ENCODE measurements at regions of chr1 and their contacts with region 1.

Region 1: DNA sequence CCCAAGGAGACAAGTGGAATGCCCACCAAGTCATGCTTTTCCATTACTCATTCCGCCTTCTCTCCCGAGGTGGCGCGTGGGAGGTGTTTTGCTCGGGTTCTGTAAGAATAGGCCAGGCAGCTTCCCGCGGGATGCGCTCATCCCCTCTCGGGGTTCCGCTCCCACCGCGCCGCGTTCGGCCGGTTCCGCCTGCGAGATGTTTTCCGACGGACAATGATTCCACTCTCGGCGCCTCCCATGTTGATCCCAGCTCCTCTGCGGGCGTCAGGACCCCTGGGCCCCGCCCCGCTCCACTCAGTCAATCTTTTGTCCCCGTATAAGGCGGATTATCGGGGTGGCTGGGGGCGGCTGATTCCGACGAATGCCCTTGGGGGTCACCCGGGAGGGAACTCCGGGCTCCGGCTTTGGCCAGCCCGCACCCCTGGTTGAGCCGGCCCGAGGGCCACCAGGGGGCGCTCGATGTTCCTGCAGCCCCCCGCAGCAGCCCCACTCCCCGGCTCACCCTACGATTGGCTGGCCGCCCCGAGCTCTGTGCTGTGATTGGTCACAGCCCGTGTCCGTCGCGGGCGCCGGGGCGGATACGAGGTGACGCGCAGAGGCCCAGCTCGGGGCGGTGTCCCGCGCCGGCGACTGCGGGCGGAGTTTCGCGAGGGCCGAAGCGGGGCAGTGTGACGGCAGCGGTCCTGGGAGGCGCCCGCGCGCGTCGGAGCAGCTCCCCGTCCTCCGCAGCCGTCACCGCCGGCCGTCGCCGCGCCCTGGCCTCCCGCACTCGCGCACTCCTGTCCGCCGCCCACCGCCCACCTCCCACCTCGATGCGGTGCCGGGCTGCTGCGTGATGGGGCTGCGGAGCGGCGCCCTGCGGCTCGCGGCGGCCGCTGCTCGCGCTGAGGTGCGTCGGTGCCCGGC is at the start of gene KIF1B:
- DNase-seq: peak; percentile 98
- H3K4me3 ChIP-seq: peak within 1 kb of the TSS; percentile 68 to 83 (median 79)
- H3K27ac ChIP-seq: peak within 1 kb of the TSS; percentile 87
- H3K4me1 ChIP-seq: peaks cover 15% of the 10 kb centered on the region
- H3K27me3 ChIP-seq: no peaks in the 10 kb centered on the region
- CTCF ChIP-seq: peak; percentile 98 to 99
- POLR2A ChIP-seq: peak; percentile 55
- total RNA-seq, gene KIF1B: 46.6 and 58.6 TPM in 2 replicates

Region 2: GRCh38 chr1:9904596-9904995 is 305.6 kb before region 1 on chr1:
- CTCF ChIA-PET with region 1: no interaction called
- POLR2A ChIA-PET with region 1: no interaction called
- dilution Hi-C with region 1: no loop called
- intact Hi-C with region 1: no loop called
- DNase-seq: no peak
- H3K4me3 ChIP-seq: no peak overlapping the region
- H3K27ac ChIP-seq: no peak overlapping the region
- H3K4me1 ChIP-seq: peaks cover 10% of the 10 kb centered on the region
- H3K27me3 ChIP-seq: no peaks in the 10 kb centered on the region
- CTCF ChIP-seq: no peak
- POLR2A ChIP-seq: no peak

Region 3: DNA sequence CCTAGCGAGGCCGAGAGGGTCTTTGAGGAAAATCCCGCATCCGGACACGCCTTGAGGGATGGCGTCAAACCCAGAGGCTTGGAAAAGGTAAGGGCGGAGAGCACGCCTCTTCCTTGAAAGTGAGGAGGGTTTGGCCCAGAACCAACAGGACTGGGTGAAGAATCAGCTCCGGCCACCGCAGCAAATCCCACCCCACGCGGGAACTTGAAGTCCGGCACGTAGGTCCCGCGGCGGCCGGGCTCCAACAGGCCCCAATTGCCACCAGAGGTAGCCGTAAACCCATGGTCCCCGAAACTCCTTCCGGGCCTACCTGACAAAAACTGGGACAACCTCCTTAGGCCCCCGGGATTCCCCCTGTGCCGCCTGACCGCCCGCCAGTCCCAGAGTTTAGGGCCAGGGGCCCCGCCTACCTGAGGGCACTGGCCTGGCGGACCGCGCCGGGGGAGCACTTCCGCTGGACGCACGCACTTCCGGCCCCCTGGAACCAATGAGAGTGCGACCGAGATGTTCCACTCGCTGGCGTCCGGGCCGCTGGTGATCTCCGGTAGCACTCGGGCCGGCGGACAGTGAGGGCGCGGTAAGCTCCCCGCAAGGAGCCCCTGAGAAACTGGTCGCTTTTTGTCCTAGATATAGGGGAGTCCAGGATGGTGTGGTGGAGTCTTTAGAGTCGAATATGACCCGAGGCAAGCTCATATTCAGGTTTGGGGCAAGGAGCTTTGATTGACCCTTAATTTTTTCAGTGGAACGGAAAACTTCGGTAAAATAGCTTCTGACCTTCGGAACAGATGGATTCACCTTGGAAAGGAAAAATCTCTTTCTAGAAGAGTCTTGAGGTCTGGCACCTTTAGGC is 267.0 kb before region 1 on chr1 and contains the starts of genes LZIC and NMNAT1:
- CTCF ChIA-PET with region 1: no interaction called
- POLR2A ChIA-PET with region 1: no interaction called
- dilution Hi-C with region 1: no loop called
- intact Hi-C with region 1: loop called (anchors 2 kb)
- DNase-seq: peak; percentile 94
- H3K4me3 ChIP-seq: peak within 1 kb of the TSS; percentile 79 to 99 (median 95)
- H3K27ac ChIP-seq: peak within 1 kb of the TSS; percentile 91
- H3K4me1 ChIP-seq: peaks cover 4% of the 10 kb centered on the region
- H3K27me3 ChIP-seq: no peaks in the 10 kb centered on the region
- CTCF ChIP-seq: no peak
- POLR2A ChIP-seq: peak; percentile 96
- total RNA-seq, gene LZIC: 22.7 and 23.4 TPM in 2 replicates
- total RNA-seq, gene NMNAT1: 7.4 and 9.8 TPM in 2 replicates

Region 4: GRCh38 chr1:10229903-10230302 is 19.7 kb after region 1 on chr1:
- CTCF ChIA-PET with region 1: interaction called, 7 read pairs
- POLR2A ChIA-PET with region 1: interaction called, 4 read pairs
- dilution Hi-C with region 1: no loop called
- intact Hi-C with region 1: loop called (anchors 2 kb)
- DNase-seq: no peak
- H3K4me3 ChIP-seq: no peak overlapping the region
- H3K27ac ChIP-seq: no peak overlapping the region
- H3K4me1 ChIP-seq: no peaks in the 10 kb centered on the region
- H3K27me3 ChIP-seq: no peaks in the 10 kb centered on the region
- CTCF ChIP-seq: no peak
- POLR2A ChIP-seq: no peak

Region 5: GRCh38 chr1:10252508-10252907 is 42.4 kb after region 1 on chr1:
- CTCF ChIA-PET with region 1: interaction called, 16 read pairs
- POLR2A ChIA-PET with region 1: no interaction called
- dilution Hi-C with region 1: no loop called
- intact Hi-C with region 1: no loop called
- DNase-seq: no peak
- H3K4me3 ChIP-seq: no peak overlapping the region
- H3K27ac ChIP-seq: no peak overlapping the region
- H3K4me1 ChIP-seq: peaks cover 4% of the 10 kb centered on the region
- H3K27me3 ChIP-seq: no peaks in the 10 kb centered on the region
- CTCF ChIP-seq: no peak
- POLR2A ChIP-seq: no peak

Region 6: GRCh38 chr1:10265900-10266299 is 55.7 kb after region 1 on chr1:
- CTCF ChIA-PET with region 1: interaction called, 12 read pairs
- POLR2A ChIA-PET with region 1: interaction called, 3 read pairs
- dilution Hi-C with region 1: no loop called
- intact Hi-C with region 1: no loop called
- DNase-seq: no peak
- H3K4me3 ChIP-seq: no peak overlapping the region
- H3K27ac ChIP-seq: no peak overlapping the region
- H3K4me1 ChIP-seq: no peaks in the 10 kb centered on the region
- H3K27me3 ChIP-seq: no peaks in the 10 kb centered on the region
- CTCF ChIP-seq: no peak
- POLR2A ChIP-seq: no peak

Region 7: DNA sequence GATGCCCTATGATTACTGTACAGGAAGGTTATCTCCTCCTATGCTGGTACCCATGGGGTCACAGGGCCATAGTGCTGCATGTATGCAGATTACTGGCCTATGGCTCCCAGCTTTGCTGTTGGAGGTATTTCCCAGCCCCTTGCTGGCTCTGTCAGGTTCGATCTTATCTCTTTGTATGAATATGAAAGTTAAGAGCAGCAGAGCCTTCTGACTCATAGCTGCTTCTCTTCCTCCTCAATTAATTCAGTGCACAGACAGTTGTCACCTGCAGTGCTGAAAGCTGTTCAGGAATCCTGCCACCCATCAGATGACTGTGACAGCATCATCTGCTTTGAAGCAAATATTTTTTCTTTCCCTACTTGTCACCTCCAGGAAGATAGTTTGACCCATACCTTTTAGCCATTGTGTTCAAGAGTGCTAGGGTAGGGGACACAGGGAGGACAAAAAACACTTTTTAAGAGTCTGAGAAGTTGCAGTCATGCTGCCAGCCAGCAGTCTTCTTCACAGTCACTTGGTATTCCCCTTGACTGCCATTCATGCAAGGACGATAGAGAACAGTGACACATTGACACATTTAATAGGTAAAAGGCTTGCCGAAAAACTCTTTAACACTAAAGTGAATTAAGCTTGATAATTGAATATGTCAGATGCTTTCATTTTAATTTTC is 73.3 kb after region 1 on chr1:
- CTCF ChIA-PET with region 1: interaction called, 17 read pairs
- POLR2A ChIA-PET with region 1: no interaction called
- dilution Hi-C with region 1: no loop called
- intact Hi-C with region 1: loop called (anchors 5 kb)
- DNase-seq: no peak
- H3K4me3 ChIP-seq: no peak overlapping the region
- H3K27ac ChIP-seq: no peak overlapping the region
- H3K4me1 ChIP-seq: no peaks in the 10 kb centered on the region
- H3K27me3 ChIP-seq: no peaks in the 10 kb centered on the region
- CTCF ChIP-seq: no peak
- POLR2A ChIP-seq: no peak

Region 8: DNA sequence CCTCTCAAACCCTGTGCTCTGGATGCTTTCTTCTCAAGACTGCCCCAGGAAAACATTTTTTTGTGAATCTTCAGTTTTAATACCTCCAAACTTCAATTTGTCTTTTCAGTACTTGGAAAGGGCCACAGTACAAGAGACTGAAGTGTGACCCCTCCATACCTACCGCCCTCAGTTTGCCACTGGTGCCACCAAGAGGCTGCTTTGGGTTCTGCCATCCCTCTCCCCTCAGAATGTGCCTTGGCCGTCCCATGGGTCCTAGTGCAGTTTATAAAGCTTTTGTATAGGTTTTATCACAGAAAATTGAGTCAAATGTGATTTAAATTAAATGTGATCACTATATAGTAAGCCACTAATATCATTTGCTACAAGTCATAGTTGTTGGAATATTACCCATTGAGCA is 127.9 kb after region 1 on chr1:
- CTCF ChIA-PET with region 1: interaction called, 24 read pairs
- POLR2A ChIA-PET with region 1: no interaction called
- dilution Hi-C with region 1: no loop called
- intact Hi-C with region 1: loop called (anchors 1 kb)
- DNase-seq: peak; percentile 58
- H3K4me3 ChIP-seq: no peak overlapping the region
- H3K27ac ChIP-seq: no peak overlapping the region
- H3K4me1 ChIP-seq: peaks cover 10% of the 10 kb centered on the region
- H3K27me3 ChIP-seq: no peaks in the 10 kb centered on the region
- CTCF ChIP-seq: peak; percentile 65 to 75
- POLR2A ChIP-seq: no peak

Region 9: DNA sequence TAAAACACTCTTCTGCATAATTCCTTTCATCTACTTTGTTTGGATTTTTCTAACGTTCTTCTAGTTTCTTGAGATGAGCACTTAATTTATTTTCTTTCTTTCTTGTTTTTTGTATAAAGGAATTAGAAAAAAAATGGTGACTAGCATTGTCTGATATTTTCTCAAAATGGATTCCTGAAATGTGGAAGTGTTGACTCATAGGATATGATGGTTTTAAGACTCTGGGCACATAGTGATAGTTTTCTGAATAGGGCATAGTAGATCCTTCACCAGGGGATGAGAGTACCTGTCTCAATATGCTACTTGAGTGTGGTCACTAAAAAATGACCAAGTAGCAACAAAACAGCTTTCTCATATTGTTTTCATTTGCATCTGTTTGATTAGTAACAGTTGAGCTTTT is 365.5 kb after region 1 on chr1:
- CTCF ChIA-PET with region 1: no interaction called
- POLR2A ChIA-PET with region 1: no interaction called
- dilution Hi-C with region 1: no loop called
- intact Hi-C with region 1: no loop called
- DNase-seq: peak; percentile 77
- H3K4me3 ChIP-seq: no peak overlapping the region
- H3K27ac ChIP-seq: peak overlapping the region; percentile 69
- H3K4me1 ChIP-seq: peaks cover 11% of the 10 kb centered on the region
- H3K27me3 ChIP-seq: no peaks in the 10 kb centered on the region
- CTCF ChIP-seq: no peak
- POLR2A ChIP-seq: no peak

Measured in endothelial cell of umbilical vein (primary cell).